Common myeloid progenitor, CD34-positive (primary cell): ENCODE measurements at regions of chr14 and their contacts with region 1.

Region 1: GRCh38 chr14:50778721-50779483 is 52.1 kb downstream of the NIN start:
- DNase-seq: no peak
- H3K4me3 ChIP-seq: no peak overlapping the region
- H3K27ac ChIP-seq: no peak overlapping the region
- H3K4me1 ChIP-seq: peaks cover 3 to 14% (median 7%) of the 10 kb centered on the region in 4 experiments
- H3K27me3 ChIP-seq: no peaks in the 10 kb centered on the region

Region 2: DNA sequence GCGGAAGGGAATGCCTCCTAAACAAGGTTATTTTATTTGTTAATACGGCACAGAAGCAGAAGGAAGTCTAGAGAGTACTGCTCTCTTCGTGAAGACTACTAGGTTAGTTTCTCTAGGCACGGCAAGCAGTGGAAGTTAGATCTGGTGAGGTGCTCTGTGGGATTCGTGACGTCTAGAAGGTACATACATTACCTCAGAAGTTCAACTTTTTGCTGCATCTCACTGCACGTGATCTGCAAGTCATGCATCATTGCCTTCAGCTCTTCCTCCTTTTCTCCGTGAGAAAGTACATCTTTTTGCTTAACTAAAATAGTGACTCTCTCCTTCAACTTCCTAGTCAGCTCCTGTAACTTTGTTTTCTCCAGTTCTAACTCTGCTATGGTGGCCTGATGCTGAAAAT is 22.6 kb before region 1 on chr14:
- CTCF ChIA-PET with region 1: interaction called, 13 read pairs
- POLR2A ChIA-PET with region 1: no interaction called
- DNase-seq: peak; percentile 15 to 40 (median 31)
- H3K4me3 ChIP-seq: no peak overlapping the region
- H3K27ac ChIP-seq: peak overlapping the region in 1 of 2 experiments; percentile 38
- H3K4me1 ChIP-seq: no peaks in the 10 kb centered on the region
- H3K27me3 ChIP-seq: no peaks in the 10 kb centered on the region

Region 3: DNA sequence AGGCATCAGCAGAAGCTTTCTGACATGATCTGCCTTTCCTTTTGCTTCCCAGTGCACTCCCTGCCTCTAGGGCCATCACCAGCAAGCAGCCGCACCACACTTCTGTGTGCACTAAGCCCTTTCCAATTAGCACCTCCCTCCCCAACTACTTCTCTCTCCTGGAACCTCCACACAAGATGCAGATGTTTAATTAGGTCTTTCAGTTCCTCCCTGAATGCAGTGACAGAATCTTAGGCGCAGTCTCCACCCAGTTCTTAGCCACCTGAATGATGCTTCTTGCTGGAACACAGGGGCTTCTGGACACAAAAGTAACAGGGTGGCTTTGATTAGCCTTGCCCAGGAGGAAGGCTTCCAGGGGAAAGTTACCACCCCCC is 19.1 kb after region 1 on chr14:
- CTCF ChIA-PET with region 1: interaction called, 119 read pairs
- POLR2A ChIA-PET with region 1: no interaction called
- DNase-seq: no peak
- H3K4me3 ChIP-seq: no peak overlapping the region
- H3K27ac ChIP-seq: no peak overlapping the region
- H3K4me1 ChIP-seq: no peaks in the 10 kb centered on the region
- H3K27me3 ChIP-seq: no peaks in the 10 kb centered on the region

Region 4: GRCh38 chr14:50855558-50855957 is 76.7 kb after region 1 on chr14:
- CTCF ChIA-PET with region 1: interaction called, 131 read pairs
- POLR2A ChIA-PET with region 1: interaction called, 3 read pairs
- DNase-seq: peak in 2 of 3 donors; percentile 34 to 44
- H3K4me3 ChIP-seq: no peak overlapping the region
- H3K27ac ChIP-seq: peak overlapping the region in 1 of 2 experiments; percentile 47
- H3K4me1 ChIP-seq: peaks cover 8 to 46% (median 45%) of the 10 kb centered on the region in 4 experiments
- H3K27me3 ChIP-seq: no peaks in the 10 kb centered on the region